T-cell (primary cell): ENCODE measurements at regions of chr20 and their contacts with region 1.

Region 1: DNA sequence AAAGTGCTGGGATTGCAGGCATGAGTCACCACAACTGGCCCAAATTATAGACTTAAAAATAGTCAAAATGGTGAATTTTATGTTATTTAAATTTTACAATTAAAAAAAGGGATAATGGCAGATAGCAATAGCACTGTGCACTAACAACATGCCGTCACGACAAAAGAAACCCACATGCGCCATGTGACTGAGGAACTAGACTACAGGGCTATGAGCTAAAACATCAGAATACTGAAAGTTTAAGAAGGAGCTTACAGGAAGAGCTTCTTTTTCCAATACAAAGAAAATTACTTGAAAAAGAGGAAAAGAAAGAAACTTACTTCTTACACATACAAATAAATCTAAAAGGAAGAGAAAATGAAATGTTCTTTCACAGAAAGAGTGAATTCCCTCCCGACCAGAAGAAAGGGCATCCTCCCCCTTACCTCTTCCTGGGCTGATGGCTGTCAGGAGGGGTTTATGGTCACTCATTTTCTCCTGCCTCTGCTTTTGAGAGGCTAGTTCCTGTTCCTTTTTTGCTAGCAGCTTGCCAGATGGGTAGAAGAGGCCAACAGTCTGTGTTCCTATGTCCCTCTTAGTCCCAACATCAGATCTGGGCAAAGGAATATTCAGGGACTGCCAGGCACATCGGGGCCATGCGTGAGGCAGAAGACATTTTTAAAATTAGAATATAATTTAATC is 54.5 kb downstream of the DZANK1 start:
- DNase-seq: no peak
- ATAC-seq: no peak
- H3K4me3 ChIP-seq: no peak overlapping the region
- H3K4me3 Mint-ChIP-seq: no peak overlapping the region
- H3K27ac ChIP-seq: no peak overlapping the region
- H3K27ac Mint-ChIP-seq: no peak overlapping the region
- H3K4me1 ChIP-seq: no peaks in the 10 kb centered on the region
- H3K4me1 Mint-ChIP-seq: peaks cover 3 to 6% (median 4%) of the 10 kb centered on the region in 3 donors
- H3K27me3 ChIP-seq: no peaks in the 10 kb centered on the region
- H3K27me3 Mint-ChIP-seq: no peaks in the 10 kb centered on the region

Region 2: DNA sequence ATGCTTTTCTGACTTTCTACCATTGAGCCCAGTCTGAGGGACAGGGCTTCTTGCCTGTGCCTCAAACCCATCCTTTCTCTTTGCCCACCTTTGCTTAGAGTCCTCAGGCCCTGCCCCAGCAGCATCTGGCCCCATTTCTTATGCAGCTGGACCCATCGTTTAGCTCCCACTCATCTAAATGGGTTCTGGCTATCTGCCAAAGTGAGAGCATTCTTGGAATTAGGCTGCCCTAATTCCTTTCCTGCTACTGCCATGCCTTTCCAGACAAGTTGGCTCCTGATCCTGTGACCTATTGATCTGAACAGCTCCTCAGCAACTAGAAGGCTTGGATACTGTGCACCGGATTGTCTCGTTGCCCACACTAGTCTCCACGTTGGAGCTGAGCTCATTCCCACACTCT is 31.5 kb after region 1 on chr20:
- CTCF ChIA-PET with region 1: no interaction called
- POLR2A ChIA-PET with region 1: no interaction called
- DNase-seq: no peak
- ATAC-seq: no peak
- H3K4me3 ChIP-seq: no peak overlapping the region
- H3K4me3 Mint-ChIP-seq: no peak overlapping the region
- H3K27ac ChIP-seq: no peak overlapping the region
- H3K27ac Mint-ChIP-seq: no peak overlapping the region
- H3K4me1 ChIP-seq: no peaks in the 10 kb centered on the region
- H3K4me1 Mint-ChIP-seq: no peaks in the 10 kb centered on the region
- H3K27me3 ChIP-seq: no peaks in the 10 kb centered on the region
- H3K27me3 Mint-ChIP-seq: no peaks in the 10 kb centered on the region

Region 3: DNA sequence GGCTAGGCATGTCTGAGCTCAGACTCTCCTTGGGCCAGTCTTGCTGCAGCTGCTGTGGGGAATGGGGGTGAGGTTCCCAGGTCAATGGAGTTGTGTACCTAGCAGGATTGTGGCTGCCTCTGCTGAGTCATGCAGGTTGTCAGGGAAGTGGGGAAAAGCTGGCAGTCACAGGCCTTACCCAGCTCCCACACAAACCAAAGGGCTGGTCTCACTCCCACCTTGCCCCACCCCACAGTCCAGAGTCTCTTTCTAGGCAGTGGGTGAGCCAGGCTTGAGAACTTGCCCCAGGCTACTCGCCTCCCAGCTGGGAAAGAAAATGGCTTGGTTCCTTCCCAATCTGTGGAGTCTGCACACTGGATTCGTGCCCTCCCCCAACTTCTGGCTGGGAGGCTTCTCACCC is 466.9 kb after region 1 on chr20:
- CTCF ChIA-PET with region 1: no interaction called
- POLR2A ChIA-PET with region 1: interaction called in 1 of 2 experiments, 10 read pairs
- DNase-seq: no peak
- ATAC-seq: no peak
- H3K4me3 ChIP-seq: no peak overlapping the region
- H3K4me3 Mint-ChIP-seq: no peak overlapping the region
- H3K27ac ChIP-seq: no peak overlapping the region
- H3K27ac Mint-ChIP-seq: no peak overlapping the region
- H3K4me1 ChIP-seq: no peaks in the 10 kb centered on the region
- H3K4me1 Mint-ChIP-seq: no peaks in the 10 kb centered on the region
- H3K27me3 ChIP-seq: peaks cover 0 to 7% of the 10 kb centered on the region in 2 experiments
- H3K27me3 Mint-ChIP-seq: peaks cover 23 to 28% of the 10 kb centered on the region in 2 donors